Esophagus muscularis mucosa (tissue), 4 donors: ENCODE measurements at regions of chr4 and their contacts with region 1.

Region 1: DNA sequence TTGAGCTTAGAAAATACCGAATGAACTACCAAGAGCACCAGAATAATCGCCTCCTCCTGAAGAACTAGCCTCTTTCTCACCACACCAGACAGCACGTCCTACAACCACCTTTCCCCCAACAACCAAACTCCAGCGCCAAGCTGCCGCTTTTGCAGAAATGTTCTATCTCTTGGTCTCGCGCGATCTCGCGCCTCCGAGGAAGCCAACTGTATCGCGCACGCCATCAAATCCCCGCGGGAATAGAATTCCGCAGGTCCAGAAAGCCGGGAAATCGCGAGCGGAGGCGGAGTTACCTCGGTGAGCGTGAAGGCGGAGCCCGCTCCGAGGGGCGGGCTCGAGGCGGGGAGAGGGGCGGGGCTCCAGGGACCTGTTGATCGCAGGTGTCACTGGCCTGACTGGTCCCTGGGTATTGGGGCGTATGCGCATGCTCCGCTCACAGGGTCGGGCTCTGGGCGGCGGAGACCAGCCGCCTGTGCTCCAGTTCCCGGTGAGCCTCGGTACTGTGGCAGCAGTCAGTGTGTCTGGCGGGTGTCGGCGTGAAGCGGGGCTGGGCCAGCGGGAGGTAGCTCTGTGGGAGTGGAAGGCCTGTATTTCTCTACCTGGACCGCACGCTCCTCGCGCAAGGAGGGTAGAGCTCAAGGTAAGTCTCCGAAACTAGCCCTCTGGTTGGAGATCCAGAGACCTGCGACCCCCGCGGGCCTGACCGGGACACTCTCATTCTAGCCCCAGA is at the start of gene USP53:
- DNase-seq: peak; percentile 99
- H3K4me3 ChIP-seq: peak within 1 kb of the TSS; percentile 76 to 95 (median 84)
- H3K27ac ChIP-seq: peak within 1 kb of the TSS; percentile 93 to 99 (median 97)
- H3K4me1 ChIP-seq: peaks cover 10 to 33% (median 33%) of the 10 kb centered on the region in 4 donors
- H3K27me3 ChIP-seq: no peaks in the 10 kb centered on the region
- CTCF ChIP-seq: no peak
- EP300 ChIP-seq: no peak
- POLR2A ChIP-seq: peak; percentile 97
- total RNA-seq, gene USP53: 68.1 to 116 (median 78.4) TPM

Region 2: DNA sequence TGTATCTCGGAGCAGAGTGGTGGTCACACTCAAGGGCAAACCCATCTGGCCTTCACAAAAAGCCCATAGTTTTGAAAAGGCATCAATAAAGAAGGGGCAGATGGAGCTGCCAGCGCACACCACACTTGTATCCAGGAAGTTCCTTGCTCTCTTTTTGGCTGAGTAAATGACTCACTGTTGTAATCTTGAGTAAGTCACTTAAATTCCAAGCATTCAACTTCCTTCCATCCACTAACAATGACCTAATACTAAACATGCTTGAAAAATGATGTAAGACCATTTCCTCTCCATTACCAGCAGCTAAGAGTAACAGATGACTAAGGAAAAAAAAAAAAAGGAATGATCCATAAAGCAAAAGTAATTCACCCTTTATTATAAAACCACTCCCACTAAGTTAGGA is 109.1 kb before region 1 on chr4:
- intact Hi-C with region 1: loop called (anchors 5 kb)
- DNase-seq: no peak
- H3K4me3 ChIP-seq: no peak overlapping the region
- H3K27ac ChIP-seq: peak overlapping the region; percentile 29 to 57 (median 48)
- H3K4me1 ChIP-seq: peaks cover 15 to 40% (median 23%) of the 10 kb centered on the region in 4 donors
- H3K27me3 ChIP-seq: no peaks in the 10 kb centered on the region
- CTCF ChIP-seq: no peak
- EP300 ChIP-seq: no peak
- POLR2A ChIP-seq: no peak